H1 (cell line): ENCODE measurements at regions of chr2 and their contacts with region 1.

Region 1: DNA sequence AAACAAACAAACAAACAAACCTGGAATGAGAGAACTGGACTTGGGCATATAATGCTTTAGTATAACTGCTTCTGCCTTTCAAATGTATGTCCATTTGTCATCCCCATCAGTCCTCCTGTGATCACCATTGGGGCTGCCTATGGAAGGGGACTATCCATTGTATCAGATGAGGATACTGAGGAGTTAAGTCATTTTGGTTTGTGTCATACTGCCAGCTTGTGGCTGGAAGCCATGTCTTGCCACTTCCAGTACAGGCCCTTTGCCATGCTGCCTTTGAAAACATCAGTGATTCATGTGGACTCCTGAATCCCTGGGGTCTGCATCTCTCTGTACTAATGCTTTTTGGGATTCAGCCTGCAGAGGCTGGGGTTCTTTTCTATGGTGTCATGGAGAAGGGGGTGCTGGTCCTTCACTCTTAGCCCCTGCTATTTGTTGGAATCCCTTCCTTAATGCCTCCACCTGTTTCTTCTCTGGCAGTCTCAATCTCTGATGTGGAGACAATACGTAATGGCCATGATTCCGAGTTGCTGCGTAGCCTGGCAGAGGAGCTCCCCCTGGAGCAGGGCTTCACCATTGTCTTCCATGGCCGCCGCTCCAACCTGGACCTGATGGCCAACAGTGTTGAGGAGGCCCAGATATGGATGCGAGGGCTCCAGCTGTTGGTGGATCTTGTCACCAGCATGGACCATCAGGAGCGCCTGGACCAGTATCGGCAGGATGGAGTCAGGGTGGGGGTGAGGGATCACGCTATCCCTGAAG is 10.6 kb downstream of the PLCD4 start:
- DNase-seq: no peak
- H3K4me3 ChIP-seq: no peak overlapping the region
- H3K27ac ChIP-seq: no peak overlapping the region
- H3K4me1 ChIP-seq: no peaks in the 10 kb centered on the region; a peak in 1 of 7 replicates
- H3K27me3 ChIP-seq: no peaks in the 10 kb centered on the region
- CTCF ChIP-seq: peak; percentile 7 to 30 (median 9); a peak in 3 of 4 replicates
- EP300 ChIP-seq: no peak
- POLR2A ChIP-seq: no peak
- RAD21 ChIP-seq: peak; percentile 36 to 46

Region 2: GRCh38 chr2:218607436-218608115 is 10.7 kb before region 1 on chr2 and contains the start of gene PLCD4:
- CTCF ChIA-PET with region 1: interaction called, 13 read pairs
- POLR2A ChIA-PET with region 1: interaction called, 5 read pairs
- DNase-seq: no peak
- H3K4me3 ChIP-seq: no peak within 1 kb of the TSS
- H3K27ac ChIP-seq: no peak within 1 kb of the TSS
- H3K4me1 ChIP-seq: peaks cover 0 to 4% (median 2%) of the 10 kb centered on the region in 4 experiments; a peak in 2 of 7 replicates
- H3K27me3 ChIP-seq: no peaks in the 10 kb centered on the region
- CTCF ChIP-seq: no peak
- EP300 ChIP-seq: no peak
- POLR2A ChIP-seq: no peak
- RAD21 ChIP-seq: no peak
- total RNA-seq, gene PLCD4: 0.50 and 0.61 TPM in 2 replicates

Region 3: GRCh38 chr2:218710687-218711549 is 92.6 kb after region 1 on chr2 and contains the start of gene TTLL4:
- CTCF ChIA-PET with region 1: no interaction called
- POLR2A ChIA-PET with region 1: no interaction called
- DNase-seq: peak; percentile 77 to 98
- H3K4me3 ChIP-seq: peak within 1 kb of the TSS; percentile 85 to 90 (median 89)
- H3K27ac ChIP-seq: peak within 1 kb of the TSS; percentile 46; the same call in 1 of the 2 replicates
- H3K4me1 ChIP-seq: peaks cover 0 to 4% (median 1%) of the 10 kb centered on the region in 4 experiments; a peak in 4 of 7 replicates
- H3K27me3 ChIP-seq: no peaks in the 10 kb centered on the region
- CTCF ChIP-seq: peak; percentile 78 to 79 (median 79)
- EP300 ChIP-seq: no peak
- POLR2A ChIP-seq: peak; percentile 66 to 76
- RAD21 ChIP-seq: peak; percentile 30 to 49; a peak in 2 of 4 replicates
- total RNA-seq, gene TTLL4: 105 and 106 TPM in 2 replicates